Ascending aorta (tissue), 2 donors: ENCODE measurements at regions of chr10 and their contacts with region 1.

Region 1: GRCh38 chr10:104254493-104255310 is at the start of gene GSTO1:
- DNase-seq: peak; percentile 59 to 91
- H3K4me3 ChIP-seq: peak within 1 kb of the TSS; percentile 86 to 87
- H3K27ac ChIP-seq: peak within 1 kb of the TSS; percentile 96 to 97
- H3K4me1 ChIP-seq: peaks cover 0 to 19% of the 10 kb centered on the region in 2 donors
- H3K27me3 ChIP-seq: no peaks in the 10 kb centered on the region
- CTCF ChIP-seq: no peak
- total RNA-seq, gene GSTO1: 62.2 TPM

Region 2: GRCh38 chr10:103901299-103901698 is 353.4 kb before region 1 on chr10:
- intact Hi-C with region 1: loop called (anchors 10 kb)
- DNase-seq: no peak
- H3K4me3 ChIP-seq: no peak overlapping the region
- H3K27ac ChIP-seq: no peak overlapping the region
- H3K4me1 ChIP-seq: peaks cover 4 to 16% of the 10 kb centered on the region in 2 donors
- H3K27me3 ChIP-seq: no peaks in the 10 kb centered on the region
- CTCF ChIP-seq: no peak

Region 3: DNA sequence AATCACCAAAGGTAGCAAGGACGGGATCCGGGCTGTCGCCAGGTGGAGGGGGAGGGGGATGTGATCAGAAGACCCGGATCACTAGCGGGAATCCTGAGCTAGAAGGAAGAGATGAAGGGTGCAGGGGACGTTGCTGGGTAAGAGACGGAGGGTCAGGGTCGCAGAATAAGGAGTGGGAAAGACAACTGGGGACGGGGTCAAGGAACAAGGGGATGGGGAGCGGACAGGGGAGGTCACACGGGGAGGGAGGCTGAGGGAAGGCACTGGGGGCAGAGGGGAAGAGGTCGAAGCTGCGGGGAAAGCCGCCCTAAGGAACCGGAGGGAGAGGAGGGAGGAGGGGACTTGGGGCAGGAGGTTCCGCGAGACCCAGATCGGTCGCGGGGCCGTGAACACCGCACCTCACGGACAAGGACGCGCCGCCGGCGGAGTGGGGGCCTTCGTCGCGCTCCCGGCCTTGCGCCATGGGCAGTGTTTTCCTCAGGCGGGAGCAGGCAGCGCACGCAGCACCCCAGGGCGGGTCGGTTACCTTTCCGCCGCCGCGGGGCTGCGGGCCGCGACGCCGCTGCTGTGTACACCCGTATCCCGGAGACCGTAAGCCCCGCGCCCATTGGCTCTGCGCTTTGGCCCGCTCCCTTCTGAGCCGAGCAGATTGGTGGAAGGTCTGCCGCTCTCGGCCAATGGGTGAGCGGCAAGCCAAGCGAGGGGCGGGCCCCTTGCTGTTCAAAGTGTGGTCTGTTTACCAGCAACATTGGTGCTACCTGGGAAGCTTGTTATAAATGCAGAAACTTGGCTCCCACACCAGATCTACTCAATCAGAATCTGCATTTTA is 22.7 kb before region 1 on chr10 and contains the start of gene CFAP43:
- intact Hi-C with region 1: loop called (anchors 1 kb)
- DNase-seq: peak; percentile 92 to 99
- H3K4me3 ChIP-seq: peak within 1 kb of the TSS; percentile 71 to 88
- H3K27ac ChIP-seq: no peak within 1 kb of the TSS
- H3K4me1 ChIP-seq: peaks cover 0 to 7% of the 10 kb centered on the region in 2 donors
- H3K27me3 ChIP-seq: no peaks in the 10 kb centered on the region
- CTCF ChIP-seq: no peak
- total RNA-seq, gene CFAP43: 0.96 TPM